ENCODE measurements at regions of chr10 and their contacts with region 1.

Region 1: DNA sequence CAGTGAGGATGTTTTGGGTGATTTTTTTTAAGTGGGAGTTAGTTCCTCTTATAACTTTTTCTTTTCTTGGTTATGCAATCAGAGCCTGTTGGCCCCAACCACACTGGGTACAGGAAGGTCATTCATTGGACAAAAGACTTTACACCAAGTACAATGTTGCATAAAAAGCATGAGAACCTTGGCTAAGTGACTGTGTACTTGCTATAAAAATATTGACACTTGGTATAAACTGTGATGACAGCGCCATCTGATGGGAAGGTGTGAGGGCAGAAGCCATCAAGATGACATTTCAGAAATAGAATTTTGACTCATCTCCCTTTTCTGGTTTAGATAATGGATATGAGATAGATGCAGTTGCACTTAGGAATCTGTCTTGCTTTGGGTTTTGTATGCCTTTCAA is 126.4 kb upstream of the CCDC6 start:
- DNase-seq: peak; percentile 41 to 64
- H3K4me3 ChIP-seq: no peak overlapping the region
- H3K27ac ChIP-seq: no peak overlapping the region
- H3K4me1 ChIP-seq: peaks cover 17% of the 10 kb centered on the region
- H3K27me3 ChIP-seq: no peaks in the 10 kb centered on the region
- CTCF ChIP-seq: peak; percentile 76

Region 2: DNA sequence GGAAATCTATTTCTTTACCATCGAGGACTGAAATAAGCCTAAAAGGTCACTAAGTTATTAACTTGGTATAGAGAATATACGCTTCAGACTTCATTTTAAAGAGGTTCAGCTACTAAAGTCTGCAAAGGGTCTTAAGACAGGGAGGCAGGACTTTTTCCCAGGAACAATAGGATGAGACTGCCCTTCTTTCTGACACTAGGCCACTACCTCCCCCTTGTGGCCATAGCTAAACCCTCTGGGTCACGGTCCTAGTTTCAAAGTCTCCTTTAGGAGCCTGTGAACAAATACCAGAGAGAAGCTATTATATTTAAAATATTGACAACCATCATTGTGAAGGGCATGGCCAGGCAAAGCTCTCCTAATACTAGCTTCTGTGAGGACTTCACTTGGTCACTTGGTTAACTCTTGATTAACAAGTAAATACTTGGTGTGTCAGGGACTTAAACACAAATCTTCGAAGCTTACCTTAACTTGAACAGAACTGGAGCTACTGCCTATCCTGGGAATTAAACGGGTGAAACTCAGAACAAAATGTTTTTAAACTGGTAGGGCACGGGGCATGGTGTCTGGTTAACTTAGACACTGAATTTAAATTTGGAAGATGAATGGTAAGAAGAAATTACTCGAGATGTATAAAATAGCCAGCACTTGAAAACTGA is 202.0 kb before region 1 on chr10:
- CTCF ChIA-PET with region 1: interaction called, 16 read pairs
- POLR2A ChIA-PET with region 1: no interaction called
- intact Hi-C with region 1: no loop called
- DNase-seq: peak in 1 of 2 experiments; percentile 29
- H3K4me3 ChIP-seq: no peak overlapping the region
- H3K27ac ChIP-seq: no peak overlapping the region
- H3K4me1 ChIP-seq: no peaks in the 10 kb centered on the region
- H3K27me3 ChIP-seq: no peaks in the 10 kb centered on the region
- CTCF ChIP-seq: peak; percentile 88

Region 3: GRCh38 chr10:59865101-59865500 is 167.6 kb before region 1 on chr10:
- CTCF ChIA-PET with region 1: interaction called, 16 read pairs
- POLR2A ChIA-PET with region 1: no interaction called
- intact Hi-C with region 1: loop called (anchors 1 kb)
- DNase-seq: peak; percentile 79 to 94
- H3K4me3 ChIP-seq: no peak overlapping the region
- H3K27ac ChIP-seq: peak overlapping the region; percentile 46
- H3K4me1 ChIP-seq: peaks cover 24% of the 10 kb centered on the region
- H3K27me3 ChIP-seq: no peaks in the 10 kb centered on the region
- CTCF ChIP-seq: peak; percentile 57; the same call in 1 of the 2 replicates

Region 4: DNA sequence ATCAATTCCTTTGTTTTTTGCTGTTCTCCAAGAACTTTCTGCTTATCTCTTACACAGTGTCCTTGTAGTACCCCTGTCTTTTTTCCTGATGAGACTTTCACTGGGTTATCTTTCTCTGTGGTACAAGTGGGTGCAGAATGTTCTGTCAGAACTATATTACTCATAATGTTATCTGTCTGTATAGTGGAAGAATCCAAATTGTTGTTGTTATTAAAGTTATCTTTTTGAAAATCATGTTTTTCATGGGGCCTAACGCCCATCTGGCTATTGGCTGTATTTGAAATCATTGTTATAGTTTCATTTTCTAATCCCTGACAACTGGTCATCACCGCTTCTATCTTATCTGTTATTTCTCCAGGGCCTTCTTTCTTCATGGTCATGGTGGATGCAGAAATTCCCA is 36.6 kb after region 1 on chr10:
- CTCF ChIA-PET with region 1: no interaction called
- POLR2A ChIA-PET with region 1: no interaction called
- intact Hi-C with region 1: no loop called
- DNase-seq: no peak
- H3K4me3 ChIP-seq: no peak overlapping the region
- H3K27ac ChIP-seq: no peak overlapping the region
- H3K4me1 ChIP-seq: no peaks in the 10 kb centered on the region
- H3K27me3 ChIP-seq: no peaks in the 10 kb centered on the region
- CTCF ChIP-seq: no peak

Region 5: DNA sequence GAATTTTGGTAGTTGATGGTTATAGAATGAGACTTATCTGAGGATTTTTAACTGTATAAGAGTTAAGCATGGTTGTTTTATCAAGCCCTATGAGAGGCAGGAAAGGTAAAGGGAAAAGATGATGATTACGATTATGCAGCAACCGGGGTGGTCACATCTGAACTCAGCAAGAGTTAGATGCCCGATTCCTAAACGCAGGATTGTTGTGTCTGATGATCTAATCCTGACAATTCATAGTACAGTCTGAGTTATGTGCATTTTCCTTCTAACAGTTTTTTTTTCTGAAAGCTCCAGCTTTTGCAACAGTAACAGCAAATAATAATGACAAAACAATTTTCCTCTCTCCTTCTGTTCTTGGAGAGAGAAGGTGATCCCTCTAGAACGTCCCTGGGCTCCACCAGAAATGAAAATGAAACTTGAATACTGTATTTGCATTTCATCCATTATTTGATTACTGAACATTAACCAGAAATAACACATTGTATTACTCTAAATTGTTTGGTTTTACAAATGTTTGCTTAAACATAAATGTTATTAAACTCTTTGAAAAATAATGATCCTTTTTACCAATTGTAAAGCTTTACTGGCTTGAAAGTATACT is 50.1 kb after region 1 on chr10:
- CTCF ChIA-PET with region 1: no interaction called
- POLR2A ChIA-PET with region 1: no interaction called
- intact Hi-C with region 1: no loop called
- DNase-seq: no peak
- H3K4me3 ChIP-seq: no peak overlapping the region
- H3K27ac ChIP-seq: no peak overlapping the region
- H3K4me1 ChIP-seq: no peaks in the 10 kb centered on the region
- H3K27me3 ChIP-seq: no peaks in the 10 kb centered on the region
- CTCF ChIP-seq: no peak

Measured in PC-9 (cell line).